Astrocyte of the cerebellum (primary cell): ENCODE measurements at regions of chr2 and their contacts with region 1.

Region 1: GRCh38 chr2:64504774-64505720 is 19.1 kb upstream of the AFTPH start:
- DNase-seq: no peak
- H3K4me3 ChIP-seq: no peak overlapping the region
- CTCF ChIP-seq: no peak

Region 2: GRCh38 chr2:64330281-64331113 is 174.6 kb before region 1 on chr2:
- in situ Hi-C with region 1: loop called (anchors 5 kb)
- DNase-seq: peak; percentile 87
- H3K4me3 ChIP-seq: peak overlapping the region; percentile 26
- CTCF ChIP-seq: peak; percentile 85

Region 3: DNA sequence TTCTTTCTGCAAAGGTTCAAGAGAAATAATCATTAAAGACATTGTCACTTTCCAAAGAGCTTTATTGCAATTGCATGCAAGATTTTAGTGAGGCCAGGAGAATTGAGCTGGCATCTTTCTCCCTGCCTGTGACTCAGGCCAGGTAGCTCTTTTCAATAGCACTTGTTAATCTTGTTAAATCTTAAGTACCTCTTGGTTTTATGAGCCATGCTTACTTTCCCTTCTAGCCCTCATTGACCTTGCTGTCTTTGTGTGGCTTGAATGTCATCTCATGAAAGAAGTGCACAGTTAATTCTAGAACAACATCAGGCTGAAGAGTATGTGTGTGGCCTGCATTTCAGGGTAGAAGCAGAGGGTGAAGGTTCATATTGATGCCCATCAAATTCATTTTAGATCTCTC is 65.9 kb before region 1 on chr2:
- in situ Hi-C with region 1: no loop called
- DNase-seq: no peak
- H3K4me3 ChIP-seq: no peak overlapping the region
- CTCF ChIP-seq: no peak

Region 4: GRCh38 chr2:64467096-64467843 is 37.8 kb before region 1 on chr2:
- in situ Hi-C with region 1: loop called (anchors 5 kb)
- DNase-seq: no peak
- H3K4me3 ChIP-seq: no peak overlapping the region
- CTCF ChIP-seq: no peak